HEK293T (cell line): ENCODE measurements at regions of chr5 and their contacts with region 1.

Region 1: GRCh38 chr5:68251386-68251785 is 35.8 kb downstream of the PIK3R1 start:
- DNase-seq: no peak

Region 2: DNA sequence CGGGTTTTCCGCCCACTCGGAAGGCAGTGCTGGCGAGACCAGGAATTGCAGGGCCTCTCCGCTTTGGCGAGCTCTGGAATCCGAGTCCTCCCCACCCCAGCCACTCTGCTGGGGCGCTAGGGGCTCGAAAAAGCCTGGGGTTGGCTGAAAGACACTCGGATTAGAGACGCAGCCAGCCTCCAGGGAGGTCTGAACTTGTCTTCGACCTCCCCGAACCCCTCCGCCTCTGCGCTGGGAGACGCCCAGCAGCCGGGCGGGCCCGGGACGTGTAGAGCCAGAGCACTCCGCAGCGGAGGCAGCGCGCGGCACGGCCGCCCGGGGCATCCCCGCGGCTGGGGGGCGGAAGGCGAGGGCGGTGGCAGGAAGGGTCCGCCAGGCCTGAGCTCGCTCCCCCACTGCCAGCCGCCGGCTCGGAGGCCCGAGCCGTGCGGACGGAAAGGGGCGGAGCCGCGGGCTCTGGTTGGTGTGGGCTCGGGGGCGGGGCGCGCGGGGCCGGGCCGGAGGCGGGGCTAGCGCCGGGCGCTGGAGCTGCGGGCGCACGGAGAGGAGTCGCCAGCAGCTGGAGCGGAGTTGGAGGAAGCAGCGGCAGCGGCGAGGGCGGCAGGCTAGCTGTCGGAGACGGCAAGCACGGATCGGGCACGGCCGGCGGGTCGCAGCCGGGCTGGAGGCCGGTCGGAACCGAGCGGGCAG is 36.0 kb before region 1 on chr5 and contains the start of gene PIK3R1:
- CTCF ChIA-PET with region 1: interaction called, 3 read pairs
- POLR2A ChIA-PET with region 1: interaction called, 10 read pairs
- DNase-seq: peak; percentile 93

Region 3: DNA sequence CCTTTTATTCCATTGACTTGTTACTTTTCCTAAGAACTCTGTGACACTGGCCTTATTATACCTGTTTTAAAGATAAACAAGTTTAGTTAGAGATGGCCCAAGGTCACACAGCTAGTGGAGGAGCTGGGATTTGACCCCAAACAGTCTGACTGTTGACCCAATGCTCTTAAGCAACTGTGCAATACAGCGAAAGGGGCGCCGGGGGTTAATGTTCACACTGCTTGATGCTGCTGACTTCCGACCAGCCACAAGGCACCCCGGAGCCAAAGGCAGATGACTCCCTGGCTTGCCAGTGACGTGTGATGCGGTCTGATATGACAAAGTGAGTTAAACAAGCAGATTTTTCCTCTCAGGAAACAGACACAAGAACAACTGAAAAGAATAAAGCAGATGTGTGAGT is 11.9 kb before region 1 on chr5:
- CTCF ChIA-PET with region 1: no interaction called
- POLR2A ChIA-PET with region 1: no interaction called
- DNase-seq: peak; percentile 20